CD8-positive, alpha-beta T cell (primary cell): ENCODE measurements at regions of chrX and their contacts with region 1.

Region 1: DNA sequence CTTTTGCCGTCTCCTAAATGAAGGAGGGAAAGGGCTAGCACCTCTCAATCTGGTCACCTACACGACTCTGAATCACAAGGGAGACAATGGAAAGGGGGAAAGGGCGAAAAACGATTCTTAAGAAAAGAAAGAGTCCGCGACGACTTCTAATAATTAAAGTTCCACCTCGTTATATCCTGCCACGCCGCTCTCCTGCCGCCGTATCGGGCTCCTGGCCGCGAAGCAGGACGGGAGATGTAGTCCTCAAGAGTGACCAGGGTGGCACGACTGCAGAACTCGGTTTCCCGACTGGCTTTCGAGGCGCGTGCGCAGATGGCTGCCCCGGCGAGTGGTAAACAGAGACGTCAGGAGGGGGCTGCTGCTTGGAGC is at the start of gene FOXO4:
- DNase-seq: peak; percentile 74 to 94 (median 88)
- ATAC-seq: peak; percentile 82
- H3K4me3 ChIP-seq: peak within 1 kb of the TSS; percentile 73 to 78
- H3K4me3 Mint-ChIP-seq: peak within 1 kb of the TSS; percentile 93
- H3K27ac ChIP-seq: peak within 1 kb of the TSS; percentile 34 to 68
- H3K27ac Mint-ChIP-seq: peak within 1 kb of the TSS; percentile 93
- H3K4me1 ChIP-seq: peaks cover 30% of the 10 kb centered on the region
- H3K4me1 Mint-ChIP-seq: peaks cover 37% of the 10 kb centered on the region
- H3K27me3 ChIP-seq: no peaks in the 10 kb centered on the region
- H3K27me3 Mint-ChIP-seq: no peaks in the 10 kb centered on the region
- CTCF ChIP-seq: no peak
- total RNA-seq, gene FOXO4: 24.1 to 32.6 TPM

Region 2: DNA sequence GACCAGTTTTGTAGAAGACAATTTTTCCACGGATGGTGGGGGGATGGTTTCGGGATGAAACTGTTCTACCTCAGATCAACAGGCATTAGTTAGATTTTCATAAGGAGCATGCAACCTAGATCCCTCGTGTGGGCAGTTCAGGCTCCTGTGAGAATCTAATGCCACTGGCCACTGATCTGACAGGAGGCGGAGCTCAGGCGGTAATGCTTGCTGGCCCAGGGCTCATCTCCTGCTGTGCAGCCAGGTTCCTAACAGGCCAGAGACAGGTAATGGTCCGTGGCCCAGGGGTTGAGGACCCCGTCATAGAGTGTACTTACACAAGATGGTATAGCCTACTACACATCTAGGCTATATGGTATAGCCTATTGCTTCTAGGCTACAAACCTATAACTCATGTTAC is 194.1 kb before region 1 on chrX:
- CTCF ChIA-PET with region 1: no interaction called
- POLR2A ChIA-PET with region 1: no interaction called
- intact Hi-C with region 1: no loop called
- DNase-seq: no peak
- ATAC-seq: no peak
- H3K4me3 ChIP-seq: no peak overlapping the region
- H3K4me3 Mint-ChIP-seq: no peak overlapping the region
- H3K27ac ChIP-seq: no peak overlapping the region
- H3K27ac Mint-ChIP-seq: no peak overlapping the region
- H3K4me1 ChIP-seq: no peaks in the 10 kb centered on the region
- H3K4me1 Mint-ChIP-seq: no peaks in the 10 kb centered on the region
- H3K27me3 ChIP-seq: no peaks in the 10 kb centered on the region
- H3K27me3 Mint-ChIP-seq: no peaks in the 10 kb centered on the region
- CTCF ChIP-seq: no peak

Region 3: DNA sequence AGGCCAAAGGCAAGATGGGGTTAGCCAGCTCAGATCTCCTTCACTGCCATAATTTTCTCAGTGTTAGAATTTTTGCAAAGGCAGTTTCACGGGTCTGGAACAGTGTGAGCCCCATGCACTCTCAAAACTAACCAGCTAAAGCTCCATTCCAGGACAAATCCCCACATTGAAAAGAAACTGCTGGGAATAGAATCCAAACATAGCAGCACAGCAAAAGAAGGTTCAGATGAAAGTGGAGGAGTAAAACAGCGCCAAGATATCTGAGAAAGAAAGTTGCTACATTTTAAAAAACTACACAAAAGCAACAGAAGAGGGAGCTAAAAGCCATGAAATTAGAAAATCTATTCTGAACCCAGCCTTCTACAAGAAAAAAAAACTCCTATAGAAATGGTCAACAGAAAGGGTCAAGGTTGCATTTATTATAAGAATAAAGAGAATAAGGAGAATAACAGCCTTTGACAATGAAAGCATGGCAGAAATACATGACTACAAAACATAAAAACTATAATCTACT is 125.0 kb before region 1 on chrX:
- CTCF ChIA-PET with region 1: no interaction called
- POLR2A ChIA-PET with region 1: no interaction called
- intact Hi-C with region 1: loop called in 1 of 2 experiments (anchors 1 kb)
- DNase-seq: peak in 2 of 9 experiments; percentile 15 to 29
- ATAC-seq: no peak
- H3K4me3 ChIP-seq: no peak overlapping the region
- H3K4me3 Mint-ChIP-seq: peak overlapping the region; percentile 62
- H3K27ac ChIP-seq: no peak overlapping the region
- H3K27ac Mint-ChIP-seq: no peak overlapping the region
- H3K4me1 ChIP-seq: no peaks in the 10 kb centered on the region
- H3K4me1 Mint-ChIP-seq: peaks cover 6% of the 10 kb centered on the region
- H3K27me3 ChIP-seq: no peaks in the 10 kb centered on the region
- H3K27me3 Mint-ChIP-seq: no peaks in the 10 kb centered on the region
- CTCF ChIP-seq: peak; percentile 33

Region 4: GRCh38 chrX:71068049-71068763 is 27.3 kb before region 1 on chrX and contains the start of gene SNX12:
- CTCF ChIA-PET with region 1: no interaction called
- POLR2A ChIA-PET with region 1: interaction called, 3 read pairs
- intact Hi-C with region 1: loop called (anchors 1 kb)
- DNase-seq: peak; percentile 70 to 95 (median 84)
- ATAC-seq: peak; percentile 92
- H3K4me3 ChIP-seq: peak within 1 kb of the TSS; percentile 76 to 88
- H3K4me3 Mint-ChIP-seq: peak within 1 kb of the TSS; percentile 94
- H3K27ac ChIP-seq: peak within 1 kb of the TSS; percentile 86 to 91
- H3K27ac Mint-ChIP-seq: peak within 1 kb of the TSS; percentile 99
- H3K4me1 ChIP-seq: peaks cover 13% of the 10 kb centered on the region
- H3K4me1 Mint-ChIP-seq: peaks cover 27% of the 10 kb centered on the region
- H3K27me3 ChIP-seq: no peaks in the 10 kb centered on the region
- H3K27me3 Mint-ChIP-seq: no peaks in the 10 kb centered on the region
- CTCF ChIP-seq: no peak
- total RNA-seq, gene SNX12: 23.9 to 27.1 TPM

Region 5: GRCh38 chrX:71111141-71111843 is 15.8 kb after region 1 on chrX and contains the start of gene IL2RG:
- CTCF ChIA-PET with region 1: interaction called, 10 read pairs
- POLR2A ChIA-PET with region 1: interaction called, 60 read pairs
- intact Hi-C with region 1: loop called (anchors 1 to 2 kb)
- DNase-seq: peak; percentile 53 to 94 (median 76)
- ATAC-seq: peak; percentile 85
- H3K4me3 ChIP-seq: peak within 1 kb of the TSS; percentile 74 to 84
- H3K4me3 Mint-ChIP-seq: peak within 1 kb of the TSS; percentile 98
- H3K27ac ChIP-seq: peak within 1 kb of the TSS; percentile 96 to 100
- H3K27ac Mint-ChIP-seq: peak within 1 kb of the TSS; percentile 99
- H3K4me1 ChIP-seq: peaks cover 41% of the 10 kb centered on the region
- H3K4me1 Mint-ChIP-seq: peaks cover 42% of the 10 kb centered on the region
- H3K27me3 ChIP-seq: no peaks in the 10 kb centered on the region
- H3K27me3 Mint-ChIP-seq: no peaks in the 10 kb centered on the region
- CTCF ChIP-seq: no peak
- total RNA-seq, gene IL2RG: 166 to 197 TPM

Region 6: DNA sequence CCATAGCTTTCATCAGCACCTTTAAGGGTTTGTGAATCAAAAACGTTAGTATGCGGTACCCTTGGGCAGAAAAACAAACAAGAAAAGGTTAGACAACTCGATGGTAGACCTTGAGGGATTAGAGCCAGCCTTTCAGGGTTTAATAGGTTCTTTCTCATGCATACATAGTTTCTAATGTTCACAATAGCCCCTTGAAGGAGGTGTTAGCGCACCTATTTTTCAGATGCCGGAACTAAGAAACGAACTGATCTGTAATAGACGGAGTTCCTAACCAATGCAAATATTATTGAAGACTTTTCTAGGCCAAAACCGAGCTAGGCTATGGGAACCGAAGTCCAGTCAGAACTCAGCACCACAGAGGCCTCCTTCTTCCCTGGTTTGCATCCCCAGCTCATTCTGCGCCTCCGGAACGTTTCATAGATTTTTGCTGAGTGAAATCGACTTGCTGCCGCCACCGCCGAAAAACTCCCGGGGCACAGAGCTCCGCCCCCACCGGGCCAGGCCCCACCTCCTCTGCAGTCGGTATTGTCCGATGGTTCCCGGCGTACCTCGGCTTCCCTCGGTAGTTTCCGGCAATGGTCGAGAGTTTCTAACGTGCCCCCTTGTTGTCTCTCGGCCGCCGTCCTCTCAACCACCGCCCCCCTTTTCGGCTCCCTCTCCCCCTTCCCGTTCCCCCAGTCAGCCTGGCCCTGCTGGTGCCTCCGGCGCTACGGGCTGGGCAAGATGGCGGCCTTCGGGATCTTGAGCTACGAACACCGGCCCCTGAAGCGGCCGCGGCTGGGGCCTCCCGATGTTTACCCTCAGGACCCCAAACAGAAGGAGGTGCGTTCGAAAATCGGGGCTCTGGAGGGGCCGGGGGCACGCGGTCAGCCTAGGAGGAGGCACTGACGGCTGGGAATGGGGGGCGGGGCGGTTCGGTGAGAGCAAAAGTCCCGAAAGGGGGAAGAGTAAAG is 22.8 kb after region 1 on chrX and contains the start of gene MED12:
- CTCF ChIA-PET with region 1: interaction called, 16 read pairs
- POLR2A ChIA-PET with region 1: interaction called, 60 read pairs
- intact Hi-C with region 1: loop called (anchors 1 to 2 kb)
- DNase-seq: peak; percentile 56 to 90 (median 83)
- ATAC-seq: peak; percentile 97
- H3K4me3 ChIP-seq: peak within 1 kb of the TSS; percentile 68 to 73
- H3K4me3 Mint-ChIP-seq: peak within 1 kb of the TSS; percentile 87
- H3K27ac ChIP-seq: peak within 1 kb of the TSS; percentile 78 to 82
- H3K27ac Mint-ChIP-seq: peak within 1 kb of the TSS; percentile 94
- H3K4me1 ChIP-seq: peaks cover 27% of the 10 kb centered on the region
- H3K4me1 Mint-ChIP-seq: peaks cover 36% of the 10 kb centered on the region
- H3K27me3 ChIP-seq: no peaks in the 10 kb centered on the region
- H3K27me3 Mint-ChIP-seq: no peaks in the 10 kb centered on the region
- CTCF ChIP-seq: no peak
- total RNA-seq, gene MED12: 54.5 to 57.4 TPM

Region 7: DNA sequence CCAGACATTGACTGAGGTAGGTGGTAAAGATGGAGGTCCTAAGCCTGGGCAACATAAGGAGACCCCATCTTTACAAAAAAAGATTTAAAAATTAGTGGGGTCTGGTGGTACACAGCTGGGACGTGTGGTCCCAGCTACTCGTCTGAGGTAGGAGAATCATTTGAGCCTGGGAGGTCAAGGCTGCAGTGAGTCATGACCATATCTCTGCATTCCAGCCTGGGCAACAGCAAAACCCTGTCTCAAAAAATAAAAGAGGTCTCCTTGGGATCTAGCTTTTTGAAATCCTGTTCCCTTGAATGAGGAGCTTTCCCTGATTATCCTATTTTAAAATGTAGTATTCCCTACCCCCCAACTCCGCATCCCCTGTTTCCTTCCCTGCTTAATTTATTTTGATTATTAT is 358.7 kb after region 1 on chrX:
- CTCF ChIA-PET with region 1: no interaction called
- POLR2A ChIA-PET with region 1: no interaction called
- intact Hi-C with region 1: no loop called
- DNase-seq: no peak
- ATAC-seq: no peak
- H3K4me3 ChIP-seq: no peak overlapping the region
- H3K4me3 Mint-ChIP-seq: no peak overlapping the region
- H3K27ac ChIP-seq: no peak overlapping the region
- H3K27ac Mint-ChIP-seq: peak overlapping the region; percentile 27
- H3K4me1 ChIP-seq: no peaks in the 10 kb centered on the region
- H3K4me1 Mint-ChIP-seq: no peaks in the 10 kb centered on the region
- H3K27me3 ChIP-seq: no peaks in the 10 kb centered on the region
- H3K27me3 Mint-ChIP-seq: no peaks in the 10 kb centered on the region
- CTCF ChIP-seq: no peak